ENCODE measurements at regions of chr11 and their contacts with region 1.

Region 1: DNA sequence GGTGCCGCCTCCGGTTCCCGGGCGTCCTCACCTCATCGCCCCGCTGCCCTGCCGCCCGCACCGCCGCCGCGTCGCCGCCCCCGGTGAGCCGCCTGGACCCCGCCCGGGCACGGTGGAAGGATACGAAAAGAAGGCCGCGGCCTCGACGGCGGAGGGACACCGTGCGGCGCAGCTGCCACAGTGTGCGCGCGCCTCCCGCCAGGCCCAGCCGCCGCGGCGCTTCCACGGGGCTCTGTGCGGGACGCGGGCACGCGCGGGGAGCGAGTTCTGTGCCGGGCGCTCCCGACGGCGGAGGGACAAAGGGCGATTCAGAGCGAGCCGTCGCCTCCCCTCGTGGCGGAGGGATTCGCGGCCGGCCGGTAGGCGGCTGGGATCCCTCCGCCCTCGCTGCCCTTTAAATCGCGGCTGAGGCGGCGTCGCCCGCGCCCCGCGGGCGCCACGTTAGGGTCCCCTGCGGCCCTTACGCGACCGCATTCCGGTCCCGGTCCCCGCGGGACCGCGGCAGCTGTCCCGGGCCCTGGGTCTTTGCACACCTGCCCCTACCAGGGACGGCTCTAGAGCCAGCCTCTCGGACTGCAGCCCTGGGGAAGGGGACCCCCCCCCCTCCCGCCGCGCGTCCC is 569 bp upstream of the KMT5B start:
- DNase-seq: peak; percentile 91
- ATAC-seq: peak; percentile 45
- H3K4me3 ChIP-seq: peak overlapping the region; percentile 79
- H3K27ac ChIP-seq: peak overlapping the region; percentile 79
- H3K4me1 ChIP-seq: peaks cover 16% of the 10 kb centered on the region
- H3K27me3 ChIP-seq: no peaks in the 10 kb centered on the region
- CTCF ChIP-seq: no peak

Region 2: DNA sequence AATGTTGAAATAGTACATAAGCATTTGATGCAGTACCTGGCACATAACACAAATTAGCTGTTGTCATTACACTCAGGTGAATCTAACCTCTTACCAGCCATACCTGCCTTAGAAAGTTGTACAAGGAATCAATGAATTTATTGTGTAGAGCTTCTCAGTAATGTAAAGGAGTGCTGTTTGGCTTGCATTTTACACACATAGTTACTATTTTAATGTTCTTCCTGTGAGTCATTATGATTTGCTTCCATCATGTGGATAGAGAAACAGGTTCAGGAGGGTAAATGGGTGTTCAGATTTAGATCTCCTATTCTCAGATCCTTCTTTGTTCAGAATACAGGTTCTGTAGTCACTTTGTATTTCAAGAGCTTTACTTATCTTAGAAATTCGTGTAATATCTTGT is 1398.0 kb before region 1 on chr11:
- CTCF ChIA-PET with region 1: no interaction called
- POLR2A ChIA-PET with region 1: no interaction called
- intact Hi-C with region 1: no loop called
- DNase-seq: peak; percentile 93
- ATAC-seq: peak; percentile 91
- H3K4me3 ChIP-seq: peak overlapping the region; percentile 40; the same call in 1 of the 2 replicates
- H3K27ac ChIP-seq: peak overlapping the region; percentile 87
- H3K4me1 ChIP-seq: peaks cover 35% of the 10 kb centered on the region
- H3K27me3 ChIP-seq: no peaks in the 10 kb centered on the region
- CTCF ChIP-seq: no peak

Region 3: GRCh38 chr11:68010090-68011041 is 203.3 kb before region 1 on chr11 and contains the start of gene ALDH3B1:
- CTCF ChIA-PET with region 1: no interaction called
- POLR2A ChIA-PET with region 1: no interaction called
- intact Hi-C with region 1: loop called (anchors 10 kb)
- DNase-seq: peak; percentile 90
- ATAC-seq: peak; percentile 41
- H3K4me3 ChIP-seq: peak within 1 kb of the TSS; percentile 65
- H3K27ac ChIP-seq: peak within 1 kb of the TSS; percentile 96
- H3K4me1 ChIP-seq: peaks cover 64% of the 10 kb centered on the region
- H3K27me3 ChIP-seq: no peaks in the 10 kb centered on the region
- CTCF ChIP-seq: no peak
- total RNA-seq, gene ALDH3B1: 26.0 and 28.1 TPM in 2 replicates

Region 4: GRCh38 chr11:68090706-68091105 is 123.0 kb before region 1 on chr11:
- CTCF ChIA-PET with region 1: no interaction called
- POLR2A ChIA-PET with region 1: no interaction called
- intact Hi-C with region 1: no loop called
- DNase-seq: peak; percentile 39
- ATAC-seq: peak; percentile 77
- H3K4me3 ChIP-seq: no peak overlapping the region
- H3K27ac ChIP-seq: no peak overlapping the region
- H3K4me1 ChIP-seq: peaks cover 3% of the 10 kb centered on the region; the same call in 1 of the 2 replicates
- H3K27me3 ChIP-seq: no peaks in the 10 kb centered on the region
- CTCF ChIP-seq: no peak

Region 5: GRCh38 chr11:68121067-68121899 is 92.4 kb before region 1 on chr11 and contains the start of gene CHKA:
- CTCF ChIA-PET with region 1: interaction called, 3 read pairs
- POLR2A ChIA-PET with region 1: no interaction called
- intact Hi-C with region 1: loop called (anchors 1 kb)
- DNase-seq: peak; percentile 96
- ATAC-seq: peak; percentile 83
- H3K4me3 ChIP-seq: peak within 1 kb of the TSS; percentile 92
- H3K27ac ChIP-seq: peak within 1 kb of the TSS; percentile 87
- H3K4me1 ChIP-seq: peaks cover 42% of the 10 kb centered on the region
- H3K27me3 ChIP-seq: no peaks in the 10 kb centered on the region
- CTCF ChIP-seq: no peak
- total RNA-seq, gene CHKA: 57.5 and 71.9 TPM in 2 replicates

Region 6: DNA sequence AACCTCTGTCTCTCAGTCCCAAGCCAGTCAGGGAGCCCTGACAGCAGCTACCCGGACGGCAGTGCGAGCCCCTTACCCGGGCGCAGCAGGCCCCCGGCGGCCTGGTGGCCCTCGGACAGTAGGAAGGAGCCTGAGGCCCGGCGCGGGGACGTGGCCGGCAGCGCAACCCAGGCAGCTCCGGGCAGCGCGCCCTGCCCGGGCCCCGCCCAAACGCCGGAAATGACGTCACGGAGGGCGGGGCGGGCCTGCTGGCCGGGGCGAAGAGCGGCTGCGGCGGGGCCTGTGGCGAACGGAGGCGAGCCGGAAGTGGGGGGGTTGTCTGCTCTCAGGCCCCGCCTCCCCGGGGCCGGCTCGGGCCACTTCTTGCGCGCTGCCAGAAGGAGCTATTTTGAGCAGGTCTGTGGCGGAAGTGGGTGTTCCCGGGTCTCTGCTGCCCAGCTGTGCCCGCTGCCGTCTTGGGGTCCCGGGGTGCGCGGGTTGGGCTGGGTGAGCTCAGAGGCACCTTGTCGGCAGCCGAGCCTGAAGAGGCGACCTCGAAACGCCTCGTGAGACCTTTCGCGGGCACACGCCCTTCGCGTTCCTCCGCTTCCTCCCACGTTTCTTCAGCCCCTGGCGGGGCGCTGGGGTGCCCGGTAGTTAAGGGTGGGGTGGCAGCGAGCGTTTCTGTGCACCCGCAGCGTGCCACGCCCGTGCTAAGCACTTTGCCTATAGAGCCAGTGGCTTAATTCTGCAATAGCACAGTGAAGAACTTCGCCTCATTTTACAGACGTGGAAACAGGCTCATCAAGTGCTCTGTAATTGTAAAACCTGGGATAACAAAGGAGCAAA is 58.3 kb after region 1 on chr11 and contains the start of gene C11orf24:
- CTCF ChIA-PET with region 1: no interaction called
- POLR2A ChIA-PET with region 1: no interaction called
- intact Hi-C with region 1: no loop called
- DNase-seq: peak; percentile 98
- ATAC-seq: peak; percentile 92
- H3K4me3 ChIP-seq: peak within 1 kb of the TSS; percentile 89
- H3K27ac ChIP-seq: peak within 1 kb of the TSS; percentile 76
- H3K4me1 ChIP-seq: peaks cover 22% of the 10 kb centered on the region
- H3K27me3 ChIP-seq: no peaks in the 10 kb centered on the region
- CTCF ChIP-seq: no peak
- total RNA-seq, gene C11orf24: 74.9 and 75.9 TPM in 2 replicates

Region 7: GRCh38 chr11:68297812-68298658 is 84.4 kb after region 1 on chr11:
- CTCF ChIA-PET with region 1: interaction called, 3 read pairs
- POLR2A ChIA-PET with region 1: interaction called, 4 read pairs
- intact Hi-C with region 1: loop called (anchors 1 kb)
- DNase-seq: peak; percentile 89
- ATAC-seq: peak; percentile 97
- H3K4me3 ChIP-seq: peak overlapping the region; percentile 52
- H3K27ac ChIP-seq: no peak overlapping the region
- H3K4me1 ChIP-seq: peaks cover 16% of the 10 kb centered on the region
- H3K27me3 ChIP-seq: no peaks in the 10 kb centered on the region
- CTCF ChIP-seq: peak; percentile 98

Measured in PC-3 (cell line).